Transverse colon (tissue), 4 donors: ENCODE measurements at regions of chr2 and their contacts with region 1.

Region 1: GRCh38 chr2:200713003-200713703 is 98.6 kb upstream of the BZW1 start:
- DNase-seq: peak; percentile 90
- H3K4me3 ChIP-seq: peak overlapping the region; percentile 9 to 41 (median 26)
- H3K27ac ChIP-seq: peak overlapping the region; percentile 67 to 75 (median 74)
- H3K4me1 ChIP-seq: peaks cover 0 to 11% (median 8%) of the 10 kb centered on the region in 4 donors
- H3K27me3 ChIP-seq: peaks cover 3% of the 10 kb centered on the region
- CTCF ChIP-seq: peak; percentile 72 to 83 (median 73)
- EP300 ChIP-seq: no peak
- POLR2A ChIP-seq: peak; percentile 86

Region 2: DNA sequence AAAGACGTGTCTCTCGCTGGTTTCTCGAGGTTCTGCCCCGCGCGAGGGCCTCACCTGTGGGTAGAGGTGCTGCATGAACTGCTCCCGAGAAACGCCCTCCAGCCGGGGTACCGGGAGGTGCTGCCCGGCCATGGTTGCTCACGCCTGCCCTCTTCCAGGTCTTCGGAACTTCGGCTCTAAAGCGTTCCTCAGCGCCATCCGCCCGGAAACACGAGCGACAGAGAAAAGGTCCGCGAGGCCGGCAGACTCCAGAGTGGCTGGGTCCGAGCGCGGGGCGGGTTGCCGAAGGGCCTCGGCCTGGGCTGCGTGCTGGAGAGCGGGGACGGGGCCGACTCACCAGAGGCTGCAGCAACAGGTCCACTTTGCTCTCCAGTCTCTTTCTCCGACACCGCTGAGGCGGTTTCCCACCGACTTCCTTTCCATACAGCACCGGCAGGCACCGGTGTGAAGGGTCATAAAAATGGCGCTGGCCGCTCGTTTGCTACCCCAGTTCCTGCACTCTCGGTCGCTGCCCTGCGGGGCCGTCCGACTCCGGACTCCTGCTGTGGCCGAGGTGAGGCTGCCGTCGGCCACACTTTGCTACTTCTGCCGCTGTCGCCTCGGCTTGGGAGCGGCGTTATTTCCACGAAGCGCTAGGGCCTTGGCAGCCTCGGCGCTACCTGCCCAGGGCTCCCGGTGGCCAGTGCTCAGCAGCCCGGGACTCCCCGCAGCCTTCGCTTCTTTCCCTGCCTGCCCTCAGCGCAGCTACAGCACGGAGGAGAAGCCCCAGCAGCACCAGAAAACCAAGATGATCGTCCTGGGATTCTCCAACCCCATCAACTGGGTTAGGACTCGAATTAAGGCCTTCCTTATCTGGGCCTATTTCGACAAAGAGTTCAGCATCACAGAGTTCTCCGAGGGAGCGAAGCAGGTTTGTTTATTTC is 757.6 kb before region 1 on chr2 and contains the starts of genes MAIP1 and TYW5:
- in situ Hi-C with region 1: loop called in 1 of 4 experiments (anchors 25 kb)
- intact Hi-C with region 1: no loop called
- DNase-seq: peak; percentile 86
- H3K4me3 ChIP-seq: peak within 1 kb of the TSS; percentile 56 to 98 (median 84)
- H3K27ac ChIP-seq: peak within 1 kb of the TSS; percentile 92 to 96 (median 94)
- H3K4me1 ChIP-seq: peaks cover 12 to 47% (median 24%) of the 10 kb centered on the region in 4 donors
- H3K27me3 ChIP-seq: no peaks in the 10 kb centered on the region
- CTCF ChIP-seq: peak in 4 of 5 experiments; percentile 12 to 34 (median 30)
- EP300 ChIP-seq: no peak
- POLR2A ChIP-seq: peak; percentile 84
- total RNA-seq, gene MAIP1: 19.1 to 104 (median 33.2) TPM
- total RNA-seq, gene TYW5: 4.9 to 27.1 (median 11.4) TPM

Region 3: GRCh38 chr2:200677721-200678585 is 35.2 kb before region 1 on chr2:
- in situ Hi-C with region 1: no loop called
- intact Hi-C with region 1: no loop called
- DNase-seq: no peak
- H3K4me3 ChIP-seq: no peak overlapping the region
- H3K27ac ChIP-seq: no peak overlapping the region
- H3K4me1 ChIP-seq: no peaks in the 10 kb centered on the region
- H3K27me3 ChIP-seq: no peaks in the 10 kb centered on the region
- CTCF ChIP-seq: no peak
- EP300 ChIP-seq: no peak
- POLR2A ChIP-seq: no peak